Naive thymus-derived CD4-positive, alpha-beta T cell (primary cell): ENCODE measurements at regions of chr14 and their contacts with region 1.

Region 1: DNA sequence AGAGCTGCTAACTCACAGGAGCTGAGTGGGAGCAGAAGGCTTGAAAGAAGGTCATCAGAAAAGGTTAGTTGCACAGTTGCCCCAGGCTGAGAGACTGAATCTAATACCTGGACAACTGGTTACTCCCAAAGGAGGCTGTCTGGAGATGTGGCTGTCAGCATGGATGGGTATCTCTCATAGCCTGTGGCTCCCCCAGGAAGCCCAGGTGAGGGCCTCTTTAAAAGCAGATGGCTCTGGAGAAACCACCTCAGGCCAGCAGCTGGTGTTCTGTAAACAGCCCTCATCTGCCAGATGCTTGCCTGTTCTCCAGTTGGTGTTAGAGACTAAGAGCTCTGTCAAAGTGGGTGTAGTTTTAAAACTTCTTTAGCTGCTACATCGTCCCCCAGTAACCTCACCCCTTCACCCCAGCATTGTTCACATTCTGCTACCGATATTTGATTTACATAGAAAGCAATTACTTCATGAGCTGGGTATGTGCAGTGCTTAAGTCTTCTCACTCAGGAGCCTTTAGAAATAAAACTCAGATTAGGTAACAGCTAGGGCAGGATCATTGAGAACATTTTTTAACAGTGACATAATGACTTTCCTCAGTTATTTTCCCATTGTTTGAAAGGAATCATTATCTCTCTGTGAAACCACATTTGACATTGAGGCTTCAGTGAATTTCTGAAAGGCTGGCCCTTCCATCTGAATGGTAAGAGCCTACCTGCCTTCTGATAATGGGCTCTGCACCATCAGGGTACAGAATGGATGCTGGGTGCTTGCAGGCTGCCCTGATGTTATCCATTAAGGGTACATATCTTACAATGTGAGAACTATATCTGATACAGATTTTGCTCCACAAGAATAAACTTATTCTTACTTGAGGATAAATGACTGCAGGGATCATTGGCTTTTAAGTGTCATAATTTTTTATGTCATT is 26.0 kb downstream of the DACT1 start:
- DNase-seq: no peak
- ATAC-seq: no peak
- H3K4me3 ChIP-seq: no peak overlapping the region
- H3K4me3 Mint-ChIP-seq: peak overlapping the region in 4 of 10 donors; percentile 1 to 61 (median 30)
- H3K27ac ChIP-seq: no peak overlapping the region
- H3K27ac Mint-ChIP-seq: peak overlapping the region; percentile 13 to 97 (median 71)
- H3K4me1 ChIP-seq: peaks cover 0 to 22% of the 10 kb centered on the region in 2 donors
- H3K4me1 Mint-ChIP-seq: peaks cover 18 to 43% (median 35%) of the 10 kb centered on the region in 7 donors
- H3K27me3 ChIP-seq: no peaks in the 10 kb centered on the region
- H3K27me3 Mint-ChIP-seq: no peaks in the 10 kb centered on the region

Region 2: GRCh38 chr14:58709949-58710348 is 46.2 kb after region 1 on chr14:
- CTCF ChIA-PET with region 1: no interaction called
- POLR2A ChIA-PET with region 1: no interaction called
- intact Hi-C with region 1: loop called in 1 of 2 experiments (anchors 2 kb)
- DNase-seq: no peak
- ATAC-seq: no peak
- H3K4me3 ChIP-seq: no peak overlapping the region
- H3K4me3 Mint-ChIP-seq: no peak overlapping the region
- H3K27ac ChIP-seq: no peak overlapping the region
- H3K27ac Mint-ChIP-seq: no peak overlapping the region
- H3K4me1 ChIP-seq: no peaks in the 10 kb centered on the region
- H3K4me1 Mint-ChIP-seq: peaks cover 0 to 3% (median 0%) of the 10 kb centered on the region in 7 donors
- H3K27me3 ChIP-seq: no peaks in the 10 kb centered on the region
- H3K27me3 Mint-ChIP-seq: peaks cover 0 to 13% (median 4%) of the 10 kb centered on the region in 5 donors

Region 3: DNA sequence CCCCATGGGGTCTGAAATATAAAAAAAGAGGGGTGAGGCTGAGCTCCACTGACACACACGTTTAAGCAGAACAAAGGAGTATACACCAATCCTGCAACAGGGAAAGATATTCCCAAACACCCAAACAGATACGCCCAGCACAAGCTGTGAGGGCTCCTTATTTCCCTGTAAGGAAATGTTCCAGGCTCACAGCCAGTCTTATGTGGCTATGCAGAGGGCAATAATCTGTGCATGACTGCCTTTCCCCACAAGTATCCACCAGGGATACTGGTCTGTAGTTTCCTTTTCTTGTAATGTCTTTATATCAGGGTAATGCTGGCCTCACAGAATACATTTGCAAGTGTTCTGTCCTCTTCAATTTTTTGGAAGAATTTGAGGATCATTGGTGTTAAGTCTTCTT is 383.0 kb after region 1 on chr14:
- CTCF ChIA-PET with region 1: no interaction called
- POLR2A ChIA-PET with region 1: no interaction called
- intact Hi-C with region 1: no loop called
- DNase-seq: no peak
- ATAC-seq: no peak
- H3K4me3 ChIP-seq: no peak overlapping the region
- H3K4me3 Mint-ChIP-seq: no peak overlapping the region
- H3K27ac ChIP-seq: no peak overlapping the region
- H3K27ac Mint-ChIP-seq: no peak overlapping the region
- H3K4me1 ChIP-seq: no peaks in the 10 kb centered on the region
- H3K4me1 Mint-ChIP-seq: no peaks in the 10 kb centered on the region
- H3K27me3 ChIP-seq: no peaks in the 10 kb centered on the region
- H3K27me3 Mint-ChIP-seq: peaks cover 0 to 13% (median 5%) of the 10 kb centered on the region in 5 donors

Region 4: DNA sequence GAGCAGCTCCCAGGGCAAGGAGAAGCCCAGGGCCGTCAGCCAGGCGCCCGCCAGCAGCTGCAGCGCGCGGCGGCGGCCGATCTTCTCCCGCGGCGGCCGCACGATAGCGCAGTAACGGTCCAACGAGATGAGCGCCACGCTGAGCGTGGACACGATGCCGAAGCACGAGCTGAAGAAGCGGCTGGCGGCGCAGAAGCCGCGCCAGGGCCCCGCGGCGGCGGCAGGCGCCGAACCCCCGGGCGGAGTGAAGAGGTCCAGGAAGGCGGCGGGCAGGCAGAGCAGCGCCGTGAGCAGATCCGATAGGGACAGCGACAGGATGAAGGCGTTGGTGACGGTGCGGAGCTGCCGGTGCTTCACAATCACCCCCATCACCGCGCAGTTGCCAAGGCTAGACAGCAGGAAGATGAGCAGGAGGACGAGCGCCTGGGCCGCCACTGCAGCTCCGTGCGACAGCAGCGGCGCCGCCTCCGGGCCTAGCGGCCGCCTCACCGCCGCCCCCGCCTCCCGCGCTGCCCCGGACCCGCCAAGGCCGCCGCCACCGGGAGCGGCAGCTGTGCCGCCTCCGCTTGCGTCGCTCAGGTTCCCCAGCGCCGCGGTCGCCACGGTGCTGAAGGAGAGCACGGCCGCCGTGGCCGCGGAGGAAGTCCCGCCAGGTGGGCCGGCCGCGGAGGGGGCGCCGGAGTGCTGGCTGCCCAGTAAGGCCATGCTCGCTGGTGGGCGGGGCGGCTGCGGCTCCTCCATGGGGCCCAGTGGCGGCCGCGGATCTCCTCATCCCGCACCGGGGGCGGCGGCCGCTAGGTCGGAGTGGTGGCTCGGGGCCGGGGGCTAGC is 800.9 kb after region 1 on chr14:
- CTCF ChIA-PET with region 1: no interaction called
- POLR2A ChIA-PET with region 1: no interaction called
- intact Hi-C with region 1: loop called in 1 of 2 experiments (anchors 10 kb)
- DNase-seq: peak; percentile 40 to 71 (median 59)
- ATAC-seq: peak; percentile 78
- H3K4me3 ChIP-seq: peak overlapping the region; percentile 66
- H3K4me3 Mint-ChIP-seq: peak overlapping the region; percentile 85 to 94 (median 90)
- H3K27ac ChIP-seq: peak overlapping the region; percentile 65
- H3K27ac Mint-ChIP-seq: peak overlapping the region in 5 of 9 donors; percentile 60 to 82 (median 72)
- H3K4me1 ChIP-seq: peaks cover 0 to 9% of the 10 kb centered on the region in 2 donors
- H3K4me1 Mint-ChIP-seq: peaks cover 0 to 17% (median 7%) of the 10 kb centered on the region in 7 donors
- H3K27me3 ChIP-seq: no peaks in the 10 kb centered on the region
- H3K27me3 Mint-ChIP-seq: peaks cover 8 to 16% (median 12%) of the 10 kb centered on the region in 5 donors